ENCODE measurements at regions of chr16 and their contacts with region 1.

Region 1: GRCh38 chr16:20741554-20742285 is at the start of gene THUMPD1:
- DNase-seq: peak; percentile 89
- H3K4me3 ChIP-seq: peak within 1 kb of the TSS; percentile 82 to 100 (median 92)
- H3K27ac ChIP-seq: peak within 1 kb of the TSS; percentile 78
- H3K4me1 ChIP-seq: peaks cover 10% of the 10 kb centered on the region
- H3K27me3 ChIP-seq: no peaks in the 10 kb centered on the region
- CTCF ChIP-seq: peak in 1 of 2 donors; percentile 39
- total RNA-seq, gene THUMPD1: 28.3 to 78.3 TPM

Region 2: DNA sequence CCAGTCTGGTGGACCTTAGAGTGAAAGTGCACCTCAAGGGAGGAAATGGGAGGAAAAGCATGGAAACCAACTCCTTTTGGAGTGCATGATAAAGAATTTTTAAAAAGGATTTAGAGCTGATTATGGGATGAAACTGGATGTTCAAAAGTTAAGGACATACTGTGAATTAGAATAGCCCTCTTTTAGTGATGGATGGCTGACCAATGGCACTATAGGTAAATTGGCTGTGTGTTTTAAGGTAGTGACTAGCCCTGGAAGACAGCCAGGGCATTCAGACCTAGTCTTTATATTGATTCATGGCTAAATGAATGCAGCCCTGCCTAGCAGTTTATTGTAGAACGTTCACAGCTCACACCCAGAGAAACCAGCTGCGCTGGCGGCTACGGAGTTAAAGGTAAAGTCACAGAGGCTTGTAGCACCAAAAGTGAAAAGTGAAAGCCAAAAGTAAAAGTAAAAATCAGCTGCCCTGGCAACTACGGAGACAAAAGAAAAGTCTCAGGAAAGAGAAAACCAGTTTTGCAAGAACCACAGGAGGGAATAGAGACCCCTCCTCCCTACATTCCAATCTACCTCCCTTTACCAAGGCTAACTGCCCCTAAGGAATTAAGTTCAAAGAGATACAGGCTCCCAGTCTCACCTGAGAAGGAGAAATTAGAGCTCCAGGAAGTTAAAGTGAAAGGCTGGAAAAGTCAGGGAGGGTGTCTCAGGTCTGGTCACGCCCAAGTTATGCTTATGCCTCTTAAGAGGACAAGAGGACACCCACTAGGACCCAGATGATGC is 66.0 kb before region 1 on chr16:
- CTCF ChIA-PET with region 1: no interaction called
- dilution Hi-C with region 1: no loop called
- in situ Hi-C with region 1: no loop called
- intact Hi-C with region 1: loop called (anchors 2 kb)
- DNase-seq: peak; percentile 74
- H3K4me3 ChIP-seq: peak overlapping the region; percentile 47 to 59 (median 49)
- H3K27ac ChIP-seq: peak overlapping the region; percentile 24
- H3K4me1 ChIP-seq: peaks cover 18% of the 10 kb centered on the region
- H3K27me3 ChIP-seq: no peaks in the 10 kb centered on the region
- CTCF ChIP-seq: no peak

Region 3: GRCh38 chr16:20806168-20807050 is 64.7 kb after region 1 on chr16 and contains the starts of genes ERI2 and REXO5:
- CTCF ChIA-PET with region 1: no interaction called
- dilution Hi-C with region 1: no loop called
- in situ Hi-C with region 1: no loop called
- intact Hi-C with region 1: loop called (anchors 2 kb)
- DNase-seq: peak; percentile 94
- H3K4me3 ChIP-seq: peak within 1 kb of the TSS; percentile 72 to 98 (median 82)
- H3K27ac ChIP-seq: peak within 1 kb of the TSS; percentile 84
- H3K4me1 ChIP-seq: peaks cover 11% of the 10 kb centered on the region
- H3K27me3 ChIP-seq: no peaks in the 10 kb centered on the region
- CTCF ChIP-seq: peak in 1 of 2 donors; percentile 59
- total RNA-seq, gene ERI2: 31.4 to 32.5 TPM
- total RNA-seq, gene REXO5: 3.5 to 6.7 TPM